ENCODE measurements at regions of chr16 and their contacts with region 1.

Region 1: GRCh38 chr16:11356573-11357331 is 11.5 kb downstream of the RMI2 start:
- DNase-seq: peak; percentile 70
- ATAC-seq: no peak
- H3K4me3 Mint-ChIP-seq: no peak overlapping the region
- H3K27ac Mint-ChIP-seq: no peak overlapping the region
- H3K4me1 Mint-ChIP-seq: peaks cover 62% of the 10 kb centered on the region
- H3K27me3 Mint-ChIP-seq: peaks cover 13% of the 10 kb centered on the region
- CTCF ChIP-seq: peak; percentile 65

Region 2: DNA sequence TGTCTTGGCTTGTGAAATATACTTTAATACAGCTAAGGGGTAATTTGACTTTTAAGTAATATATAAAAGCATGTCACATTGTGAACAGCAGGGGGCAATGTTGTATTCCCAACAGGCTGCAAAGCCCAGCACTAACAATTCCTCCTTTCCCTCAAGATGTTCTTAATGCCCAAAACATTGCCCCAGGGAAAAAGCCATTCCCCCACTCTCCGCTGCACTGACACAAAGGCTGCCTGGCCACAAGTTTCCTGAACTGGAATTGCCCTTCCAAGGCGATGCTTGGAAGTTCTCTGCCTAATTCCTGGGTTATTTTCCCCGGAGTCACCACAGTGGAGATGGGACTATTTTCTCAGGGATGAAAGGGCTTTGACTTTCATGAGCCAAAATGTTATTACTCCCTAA is 385.2 kb before region 1 on chr16:
- CTCF ChIA-PET with region 1: interaction called, 13 read pairs
- POLR2A ChIA-PET with region 1: no interaction called
- intact Hi-C with region 1: loop called (anchors 5 kb)
- DNase-seq: peak; percentile 47
- ATAC-seq: no peak
- H3K4me3 Mint-ChIP-seq: no peak overlapping the region
- H3K27ac Mint-ChIP-seq: peak overlapping the region; percentile 32
- H3K4me1 Mint-ChIP-seq: peaks cover 31% of the 10 kb centered on the region
- H3K27me3 Mint-ChIP-seq: no peaks in the 10 kb centered on the region
- CTCF ChIP-seq: peak; percentile 95

Region 3: GRCh38 chr16:11297492-11298142 is 59.1 kb before region 1 on chr16:
- CTCF ChIA-PET with region 1: interaction called, 11 read pairs
- POLR2A ChIA-PET with region 1: interaction called, 17 read pairs
- intact Hi-C with region 1: no loop called
- DNase-seq: peak; percentile 85
- ATAC-seq: peak; percentile 83
- H3K4me3 Mint-ChIP-seq: peak overlapping the region; percentile 24
- H3K27ac Mint-ChIP-seq: peak overlapping the region; percentile 69
- H3K4me1 Mint-ChIP-seq: peaks cover 44% of the 10 kb centered on the region
- H3K27me3 Mint-ChIP-seq: peaks cover 7% of the 10 kb centered on the region
- CTCF ChIP-seq: no peak

Region 4: GRCh38 chr16:11345040-11345862 is 11.5 kb before region 1 on chr16 and contains the start of gene RMI2:
- CTCF ChIA-PET with region 1: interaction called, 4 read pairs
- POLR2A ChIA-PET with region 1: interaction called, 20 read pairs
- intact Hi-C with region 1: no loop called
- DNase-seq: peak; percentile 98
- ATAC-seq: peak; percentile 99
- H3K4me3 Mint-ChIP-seq: peak within 1 kb of the TSS; percentile 83
- H3K27ac Mint-ChIP-seq: peak within 1 kb of the TSS; percentile 84
- H3K4me1 Mint-ChIP-seq: peaks cover 48% of the 10 kb centered on the region
- H3K27me3 Mint-ChIP-seq: no peaks in the 10 kb centered on the region
- CTCF ChIP-seq: no peak
- total RNA-seq, gene RMI2: 53.1 to 57.7 TPM

Region 5: GRCh38 chr16:11396241-11397048 is 39.7 kb after region 1 on chr16:
- CTCF ChIA-PET with region 1: no interaction called
- POLR2A ChIA-PET with region 1: no interaction called
- intact Hi-C with region 1: no loop called
- DNase-seq: peak; percentile 72
- ATAC-seq: peak; percentile 92
- H3K4me3 Mint-ChIP-seq: no peak overlapping the region
- H3K27ac Mint-ChIP-seq: peak overlapping the region; percentile 25
- H3K4me1 Mint-ChIP-seq: no peaks in the 10 kb centered on the region
- H3K27me3 Mint-ChIP-seq: no peaks in the 10 kb centered on the region
- CTCF ChIP-seq: peak; percentile 100

Measured in activated CD8-positive, alpha-beta T cell treated with anti-CD3 and anti-CD28 coated beads for 36 hours (primary cell).